ENCODE measurements at regions of chr15 and their contacts with region 1.

Region 1: DNA sequence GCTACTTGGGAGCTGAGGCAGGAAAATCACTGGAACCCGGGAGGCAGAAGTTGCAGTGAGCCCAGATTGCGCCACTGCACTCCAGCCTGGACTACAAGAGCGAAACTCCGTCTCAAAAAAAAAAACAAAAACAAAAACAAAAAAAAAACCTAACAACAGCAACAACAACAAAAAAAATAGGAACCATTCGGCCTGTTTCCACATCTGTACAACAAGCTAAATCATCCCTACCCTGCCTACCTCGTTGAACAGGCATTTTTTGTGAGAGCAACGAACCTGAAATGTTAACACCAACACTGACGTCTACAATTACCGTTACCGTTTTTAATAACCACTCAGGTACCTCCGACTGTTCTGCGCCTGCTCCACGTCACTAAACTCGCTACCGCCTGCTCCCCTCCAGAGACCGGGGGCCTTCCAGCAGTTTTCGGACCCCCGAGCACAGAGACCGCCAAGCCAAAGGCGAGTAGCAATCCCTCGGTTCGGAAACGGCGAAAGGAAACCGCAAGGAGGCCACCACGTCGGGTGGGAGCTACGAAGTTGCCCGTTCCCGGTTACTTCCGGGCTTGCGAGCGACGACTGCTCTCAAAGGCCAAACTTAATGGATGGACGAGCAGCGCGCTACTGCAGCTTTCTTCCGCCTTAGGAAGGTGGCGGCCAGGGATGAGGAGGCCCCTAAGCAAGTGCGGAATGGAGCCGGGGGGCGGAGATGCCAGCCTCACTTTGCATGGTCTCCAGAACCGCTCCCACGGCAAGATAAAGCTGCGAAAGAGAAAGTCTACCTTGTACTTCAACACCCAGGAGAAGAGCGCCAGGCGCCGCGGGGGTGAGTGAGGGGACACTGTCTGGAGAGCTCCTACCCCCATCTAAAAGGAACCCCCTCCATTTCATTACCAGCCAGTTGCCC is at the starts of genes PIGB and PIGBOS1:
- DNase-seq: peak; percentile 59 to 90 (median 79)
- ATAC-seq: peak; percentile 88
- H3K4me3 ChIP-seq: peak within 1 kb of the TSS; percentile 80 to 98
- H3K4me3 Mint-ChIP-seq: peak within 1 kb of the TSS; percentile 98
- H3K27ac ChIP-seq: peak within 1 kb of the TSS; percentile 95 to 99
- H3K27ac Mint-ChIP-seq: peak within 1 kb of the TSS; percentile 100
- H3K4me1 ChIP-seq: peaks cover 39% of the 10 kb centered on the region
- H3K4me1 Mint-ChIP-seq: peaks cover 81% of the 10 kb centered on the region
- H3K27me3 ChIP-seq: no peaks in the 10 kb centered on the region
- H3K27me3 Mint-ChIP-seq: no peaks in the 10 kb centered on the region
- CTCF ChIP-seq: no peak
- total RNA-seq, gene PIGB: 17.8 to 19.2 TPM
- total RNA-seq, gene PIGBOS1: 6.4 to 6.8 TPM

Region 2: DNA sequence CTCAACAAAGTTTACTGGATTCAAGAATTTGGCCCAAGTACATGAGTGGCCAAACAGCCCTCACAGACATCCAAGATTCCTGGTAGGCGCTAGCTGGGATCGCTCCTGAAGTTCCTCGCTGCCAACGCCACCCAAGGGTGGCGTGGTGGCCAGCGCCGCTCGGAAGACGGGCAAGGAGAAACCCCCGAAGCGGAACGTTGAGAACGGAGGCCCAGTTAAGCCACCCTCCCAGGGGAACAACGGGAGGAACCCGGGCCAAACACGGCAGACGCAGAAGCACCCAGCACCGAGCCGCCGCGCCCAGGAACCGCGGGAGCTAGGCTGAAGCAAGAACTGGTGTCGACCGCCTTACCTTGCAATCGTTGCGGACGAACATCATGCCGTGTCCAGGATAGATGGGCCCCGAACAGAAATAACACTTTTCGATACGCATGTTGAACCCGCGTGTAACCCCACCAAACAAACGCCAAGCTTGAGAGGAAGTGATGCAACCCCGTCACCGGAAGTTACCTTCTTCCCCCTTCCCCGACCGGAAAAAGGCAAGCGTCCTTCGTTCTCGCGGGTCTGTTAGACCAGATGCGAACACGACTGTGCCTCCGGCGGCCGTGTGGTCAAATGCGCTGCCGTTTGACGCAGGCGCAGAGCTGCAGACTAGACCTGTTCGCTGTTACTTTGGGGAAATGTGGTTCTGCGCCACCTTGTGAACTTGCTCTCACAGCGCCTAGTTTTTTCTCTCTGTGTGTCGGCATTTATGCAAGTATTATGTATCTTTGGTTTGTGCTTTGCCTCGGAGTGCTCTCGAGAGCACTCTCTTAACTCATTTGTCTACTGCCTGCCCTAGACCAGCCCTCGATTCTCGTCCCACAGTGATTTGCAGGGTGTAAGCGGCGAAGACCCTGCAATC is 122.1 kb before region 1 on chr15 and contains the start of gene RSL24D1:
- CTCF ChIA-PET with region 1: no interaction called
- POLR2A ChIA-PET with region 1: interaction called, 38 read pairs
- intact Hi-C with region 1: loop called in 1 of 2 experiments (anchors 1 kb)
- DNase-seq: peak; percentile 92 to 100 (median 96)
- ATAC-seq: peak; percentile 95
- H3K4me3 ChIP-seq: peak within 1 kb of the TSS; percentile 82 to 90
- H3K4me3 Mint-ChIP-seq: no peak within 1 kb of the TSS
- H3K27ac ChIP-seq: peak within 1 kb of the TSS; percentile 94
- H3K27ac Mint-ChIP-seq: no peak within 1 kb of the TSS
- H3K4me1 ChIP-seq: peaks cover 37% of the 10 kb centered on the region
- H3K4me1 Mint-ChIP-seq: peaks cover 21% of the 10 kb centered on the region
- H3K27me3 ChIP-seq: no peaks in the 10 kb centered on the region
- H3K27me3 Mint-ChIP-seq: no peaks in the 10 kb centered on the region
- CTCF ChIP-seq: no peak
- total RNA-seq, gene RSL24D1: 181 to 186 TPM

Region 3: DNA sequence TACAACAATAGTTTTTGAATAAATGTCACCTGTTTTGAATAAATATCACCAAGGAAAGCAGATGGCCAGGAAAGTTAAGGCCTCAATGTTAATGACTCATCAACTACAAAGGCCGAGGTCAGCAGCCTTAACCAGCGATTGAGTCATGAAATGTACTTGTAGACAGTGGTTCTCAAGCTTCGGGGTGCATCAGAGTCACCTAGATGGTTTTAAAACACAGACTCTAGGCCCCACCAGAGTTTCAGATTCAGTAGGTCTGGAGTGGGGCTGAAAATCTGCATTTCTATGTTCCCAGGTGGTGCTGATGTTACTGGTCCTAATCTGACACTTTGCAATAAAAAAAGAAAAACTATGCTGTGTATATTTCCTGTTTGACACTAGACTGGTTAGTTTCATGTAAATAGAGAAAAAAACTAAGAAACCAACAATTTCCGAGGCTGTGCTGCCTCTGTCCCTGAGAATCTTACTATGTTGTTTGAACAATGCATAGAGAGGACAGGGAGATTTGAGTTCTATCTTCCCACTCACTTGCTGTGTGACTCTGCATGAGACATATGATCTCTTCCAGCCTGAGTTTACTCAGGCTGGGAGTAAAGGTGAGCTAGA is 39.0 kb before region 1 on chr15:
- CTCF ChIA-PET with region 1: no interaction called
- POLR2A ChIA-PET with region 1: no interaction called
- intact Hi-C with region 1: loop called in 1 of 2 experiments (anchors 5 kb)
- DNase-seq: peak in 7 of 9 experiments; percentile 37 to 86 (median 68)
- ATAC-seq: peak; percentile 64
- H3K4me3 ChIP-seq: no peak overlapping the region
- H3K4me3 Mint-ChIP-seq: peak overlapping the region; percentile 44
- H3K27ac ChIP-seq: peak overlapping the region; percentile 2 to 87
- H3K27ac Mint-ChIP-seq: peak overlapping the region; percentile 86
- H3K4me1 ChIP-seq: peaks cover 77% of the 10 kb centered on the region
- H3K4me1 Mint-ChIP-seq: peaks cover 95% of the 10 kb centered on the region
- H3K27me3 ChIP-seq: no peaks in the 10 kb centered on the region
- H3K27me3 Mint-ChIP-seq: no peaks in the 10 kb centered on the region
- CTCF ChIP-seq: no peak

Region 4: DNA sequence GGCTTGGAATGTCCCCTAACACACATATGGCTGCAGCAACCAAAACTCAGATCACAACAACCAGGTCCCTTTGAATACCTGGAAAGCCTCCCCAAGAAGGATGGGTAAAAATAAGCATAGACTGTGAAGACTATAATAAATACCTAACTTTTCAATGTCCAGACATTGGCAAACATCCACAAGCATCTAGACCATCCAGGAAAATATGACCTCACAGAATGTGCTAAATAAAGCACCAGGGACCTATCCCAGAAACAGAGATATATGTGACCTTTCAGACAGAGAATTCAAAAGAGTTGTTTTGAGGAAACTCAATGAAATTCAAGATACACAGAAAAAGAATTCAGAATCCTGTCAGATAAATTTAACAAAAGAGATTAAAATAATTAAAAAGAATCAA is 565.4 kb after region 1 on chr15:
- CTCF ChIA-PET with region 1: no interaction called
- POLR2A ChIA-PET with region 1: no interaction called
- intact Hi-C with region 1: no loop called
- DNase-seq: no peak
- ATAC-seq: no peak
- H3K4me3 ChIP-seq: no peak overlapping the region
- H3K4me3 Mint-ChIP-seq: no peak overlapping the region
- H3K27ac ChIP-seq: no peak overlapping the region
- H3K27ac Mint-ChIP-seq: no peak overlapping the region
- H3K4me1 ChIP-seq: no peaks in the 10 kb centered on the region
- H3K4me1 Mint-ChIP-seq: no peaks in the 10 kb centered on the region
- H3K27me3 ChIP-seq: no peaks in the 10 kb centered on the region
- H3K27me3 Mint-ChIP-seq: no peaks in the 10 kb centered on the region
- CTCF ChIP-seq: no peak